ENCODE measurements at regions of chr1 and their contacts with region 1.

Region 1: GRCh38 chr1:24391882-24392603 is 21.5 kb downstream of the STPG1 start:
- DNase-seq: peak; percentile 71
- H3K4me3 Mint-ChIP-seq: peak overlapping the region; percentile 64
- H3K27ac Mint-ChIP-seq: peak overlapping the region; percentile 97
- H3K4me1 Mint-ChIP-seq: peaks cover 55% of the 10 kb centered on the region
- H3K27me3 Mint-ChIP-seq: no peaks in the 10 kb centered on the region
- CTCF ChIP-seq: peak; percentile 87

Region 2: DNA sequence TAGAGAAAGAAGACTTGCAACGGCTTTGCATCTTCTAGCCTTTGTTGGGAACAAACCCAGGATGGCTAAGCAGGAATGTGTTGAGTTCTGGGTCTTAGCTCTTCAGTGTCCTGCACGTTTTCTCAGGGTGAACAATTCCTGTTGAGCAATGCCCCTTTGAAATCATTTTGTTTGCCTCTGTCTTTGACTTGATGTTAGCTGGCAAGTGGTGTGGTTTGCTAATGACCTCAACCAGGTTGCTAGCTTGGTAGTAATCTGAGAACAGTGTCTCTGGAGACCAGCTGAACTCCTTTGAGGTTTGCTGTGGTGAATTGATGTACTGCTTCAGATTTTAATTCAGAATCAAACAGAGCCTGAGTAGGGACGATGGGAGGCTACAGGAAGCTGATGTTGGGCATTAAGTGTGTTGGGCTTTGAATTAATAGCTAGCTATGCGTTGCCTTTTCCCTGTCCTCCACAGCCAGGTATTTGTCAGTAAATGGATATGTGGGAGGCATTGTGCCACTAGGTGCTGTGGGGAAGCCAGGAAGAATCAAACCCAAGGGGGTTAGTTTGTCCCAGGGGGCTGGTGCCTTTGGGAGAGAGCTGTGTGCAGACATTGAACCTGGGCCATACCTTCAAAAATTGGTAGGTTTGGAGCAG is 388.6 kb before region 1 on chr1:
- CTCF ChIA-PET with region 1: no interaction called
- POLR2A ChIA-PET with region 1: no interaction called
- intact Hi-C with region 1: no loop called
- DNase-seq: peak; percentile 85
- H3K4me3 Mint-ChIP-seq: no peak overlapping the region
- H3K27ac Mint-ChIP-seq: peak overlapping the region; percentile 70
- H3K4me1 Mint-ChIP-seq: peaks cover 14% of the 10 kb centered on the region
- H3K27me3 Mint-ChIP-seq: no peaks in the 10 kb centered on the region
- CTCF ChIP-seq: no peak

Region 3: GRCh38 chr1:24070821-24071393 is 321.1 kb before region 1 on chr1:
- CTCF ChIA-PET with region 1: interaction called, 5 read pairs
- POLR2A ChIA-PET with region 1: no interaction called
- intact Hi-C with region 1: loop called (anchors 1 kb)
- DNase-seq: peak; percentile 84
- H3K4me3 Mint-ChIP-seq: no peak overlapping the region
- H3K27ac Mint-ChIP-seq: no peak overlapping the region
- H3K4me1 Mint-ChIP-seq: peaks cover 3% of the 10 kb centered on the region
- H3K27me3 Mint-ChIP-seq: no peaks in the 10 kb centered on the region
- CTCF ChIP-seq: peak; percentile 88

Region 4: DNA sequence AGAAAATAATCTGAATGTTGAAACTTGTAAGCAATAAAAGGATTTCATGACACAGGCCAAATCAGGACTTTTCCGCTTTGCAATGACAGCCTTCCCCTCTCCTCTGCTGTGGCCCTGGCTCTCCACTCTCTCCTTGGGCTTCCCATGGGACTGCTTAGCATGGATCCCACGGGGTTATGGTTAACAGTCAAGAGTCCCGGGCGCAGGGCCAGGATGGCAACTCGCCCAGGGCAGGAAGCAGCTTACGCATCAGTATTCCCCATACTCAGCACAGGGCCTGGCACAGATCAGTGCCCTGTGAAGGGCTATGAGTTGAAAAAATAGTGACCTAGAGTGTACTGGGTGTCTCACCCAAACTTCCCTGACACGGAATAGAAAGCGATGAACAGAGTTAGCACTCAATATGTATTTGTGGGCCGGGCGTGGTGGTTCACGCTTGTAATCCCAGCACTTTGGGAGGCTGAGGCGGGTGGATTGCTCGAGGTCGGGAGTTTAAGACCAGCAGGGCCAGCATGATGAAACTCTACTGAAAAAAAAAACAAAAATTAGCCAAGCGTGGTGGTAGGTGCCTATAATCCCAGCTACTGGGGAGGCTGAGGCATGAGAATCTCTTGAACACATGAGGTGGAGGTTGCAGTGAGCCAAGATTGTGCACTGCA is 102.0 kb before region 1 on chr1:
- CTCF ChIA-PET with region 1: interaction called, 29 read pairs
- POLR2A ChIA-PET with region 1: interaction called, 17 read pairs
- intact Hi-C with region 1: loop called (anchors 1 kb)
- DNase-seq: peak; percentile 99
- H3K4me3 Mint-ChIP-seq: peak overlapping the region; percentile 44
- H3K27ac Mint-ChIP-seq: peak overlapping the region; percentile 94
- H3K4me1 Mint-ChIP-seq: peaks cover 55% of the 10 kb centered on the region
- H3K27me3 Mint-ChIP-seq: no peaks in the 10 kb centered on the region
- CTCF ChIP-seq: no peak

Region 5: GRCh38 chr1:24374891-24375786 is 16.9 kb before region 1 on chr1:
- CTCF ChIA-PET with region 1: interaction called, 21 read pairs
- POLR2A ChIA-PET with region 1: interaction called, 12 read pairs
- intact Hi-C with region 1: no loop called
- DNase-seq: peak; percentile 43
- H3K4me3 Mint-ChIP-seq: peak overlapping the region; percentile 56
- H3K27ac Mint-ChIP-seq: peak overlapping the region; percentile 99
- H3K4me1 Mint-ChIP-seq: peaks cover 35% of the 10 kb centered on the region
- H3K27me3 Mint-ChIP-seq: no peaks in the 10 kb centered on the region
- CTCF ChIP-seq: no peak

Region 6: GRCh38 chr1:24454673-24455072 is 62.6 kb after region 1 on chr1:
- CTCF ChIA-PET with region 1: no interaction called
- POLR2A ChIA-PET with region 1: no interaction called
- intact Hi-C with region 1: no loop called
- DNase-seq: no peak
- H3K4me3 Mint-ChIP-seq: no peak overlapping the region
- H3K27ac Mint-ChIP-seq: peak overlapping the region; percentile 75
- H3K4me1 Mint-ChIP-seq: no peaks in the 10 kb centered on the region
- H3K27me3 Mint-ChIP-seq: no peaks in the 10 kb centered on the region
- CTCF ChIP-seq: no peak

Region 7: GRCh38 chr1:24502709-24503058 is 110.6 kb after region 1 on chr1 and contains the start of gene RCAN3:
- CTCF ChIA-PET with region 1: interaction called, 5 read pairs
- POLR2A ChIA-PET with region 1: interaction called, 12 read pairs
- intact Hi-C with region 1: no loop called
- DNase-seq: peak; percentile 81
- H3K4me3 Mint-ChIP-seq: peak within 1 kb of the TSS; percentile 76
- H3K27ac Mint-ChIP-seq: peak within 1 kb of the TSS; percentile 59
- H3K4me1 Mint-ChIP-seq: peaks cover 16% of the 10 kb centered on the region
- H3K27me3 Mint-ChIP-seq: no peaks in the 10 kb centered on the region
- CTCF ChIP-seq: no peak
- total RNA-seq, gene RCAN3: 6.1 and 7.1 TPM in 2 replicates

Region 8: DNA sequence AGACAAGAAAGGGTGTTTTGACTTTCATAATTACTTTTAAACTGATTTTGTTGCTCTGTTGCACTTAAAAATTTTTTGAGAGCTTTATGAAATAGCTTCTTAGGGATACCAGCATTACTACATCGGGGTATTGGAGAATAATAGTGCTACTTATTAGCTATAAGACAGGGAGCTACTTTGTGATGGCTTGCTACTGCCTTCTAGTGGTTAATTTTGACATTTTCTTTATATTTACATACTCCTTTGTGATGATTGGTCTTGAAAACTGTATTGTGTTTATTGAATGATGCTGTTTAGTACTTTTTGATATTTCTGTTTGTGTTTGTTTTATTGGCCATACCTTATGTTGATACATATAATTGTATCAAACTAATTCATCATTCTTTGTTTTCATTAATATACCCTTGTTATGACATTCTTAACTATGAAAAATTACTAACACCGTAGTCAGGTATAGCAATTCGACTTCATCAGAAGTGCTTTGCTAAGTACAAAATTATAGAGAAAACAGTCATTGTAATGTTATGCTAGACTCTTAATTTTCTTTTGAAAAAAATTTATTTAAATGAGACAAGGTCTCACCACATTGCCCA is 438.7 kb after region 1 on chr1:
- CTCF ChIA-PET with region 1: interaction called, 4 read pairs
- POLR2A ChIA-PET with region 1: no interaction called
- intact Hi-C with region 1: loop called (anchors 10 kb)
- DNase-seq: peak; percentile 64
- H3K4me3 Mint-ChIP-seq: no peak overlapping the region
- H3K27ac Mint-ChIP-seq: no peak overlapping the region
- H3K4me1 Mint-ChIP-seq: peaks cover 19% of the 10 kb centered on the region
- H3K27me3 Mint-ChIP-seq: no peaks in the 10 kb centered on the region
- CTCF ChIP-seq: peak; percentile 78